ENCODE measurements at regions of chr4 and their contacts with region 1.

Region 1: DNA sequence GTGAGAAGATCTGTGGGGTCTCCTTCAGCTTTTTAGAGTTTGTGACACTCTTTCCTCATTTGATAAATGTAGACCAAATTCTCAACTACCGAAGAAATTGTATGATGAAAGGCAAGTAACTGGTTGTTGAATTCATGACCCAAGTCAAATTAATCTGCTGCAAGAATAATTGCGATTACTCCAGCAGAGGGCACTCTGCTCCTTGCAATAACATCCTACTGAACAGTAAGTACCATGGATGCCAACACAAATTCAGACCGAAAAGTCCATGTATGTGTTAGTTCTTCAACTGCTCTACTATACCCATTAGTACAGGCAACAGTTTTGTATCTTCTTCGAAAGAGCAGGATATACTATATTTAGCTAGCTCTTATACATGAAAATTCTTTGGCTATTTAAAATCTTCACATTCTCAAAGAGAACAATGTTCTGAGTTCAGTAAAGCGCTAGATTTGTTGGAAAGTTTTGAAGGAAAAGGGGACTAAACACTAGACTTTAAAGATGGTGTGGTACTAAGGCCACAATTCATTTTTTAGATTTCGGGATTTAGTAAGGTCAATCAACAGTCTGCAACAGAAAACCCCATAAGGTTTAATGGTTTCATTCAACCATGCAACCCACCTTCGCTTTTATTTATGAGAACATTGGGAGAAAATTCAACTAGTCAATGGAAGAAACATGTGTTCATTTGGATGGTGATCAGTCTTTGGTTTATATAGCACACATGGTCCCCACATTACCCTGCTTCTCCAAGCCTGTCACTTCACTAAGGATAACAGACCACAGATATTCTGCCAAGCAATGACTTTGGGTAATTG is 105.4 kb upstream of the TBC1D9 start:
- DNase-seq: peak; percentile 43
- CTCF ChIP-seq: peak; percentile 53

Region 2: GRCh38 chr4:140359562-140360427 is 501.8 kb before region 1 on chr4:
- in situ Hi-C with region 1: loop called (anchors 10 kb)
- DNase-seq: peak; percentile 53
- CTCF ChIP-seq: peak; percentile 65

Region 3: DNA sequence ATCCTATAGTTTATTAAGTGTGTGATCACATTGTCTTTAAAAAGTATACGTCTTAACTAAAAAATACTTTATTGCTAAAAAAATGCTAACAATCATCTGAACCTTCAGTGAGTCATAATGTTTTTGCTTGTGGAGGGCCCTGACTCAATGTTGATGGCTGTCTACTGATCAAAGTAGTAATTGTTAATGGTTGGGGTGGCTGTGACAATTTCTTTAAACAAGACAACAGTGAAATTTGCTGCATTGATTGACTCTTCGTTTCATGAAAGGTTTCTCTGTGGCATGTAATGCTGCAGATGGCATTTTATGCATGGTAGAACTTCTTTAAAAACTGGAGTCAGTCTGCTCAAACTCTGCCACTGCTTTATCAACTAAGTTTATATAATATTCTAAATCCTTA is 673.4 kb after region 1 on chr4:
- in situ Hi-C with region 1: no loop called
- DNase-seq: no peak
- CTCF ChIP-seq: no peak

Measured in GM13976 (cell line).